Activated CD4-positive, alpha-beta memory T cell treated with anti-CD3 and anti-CD28 coated beads, Interleukin-2, amount 10 ng/mL, durations not matched to agents 7 days and 5 days (primary cell): ENCODE measurements at regions of chr3 and their contacts with region 1.

Region 1: DNA sequence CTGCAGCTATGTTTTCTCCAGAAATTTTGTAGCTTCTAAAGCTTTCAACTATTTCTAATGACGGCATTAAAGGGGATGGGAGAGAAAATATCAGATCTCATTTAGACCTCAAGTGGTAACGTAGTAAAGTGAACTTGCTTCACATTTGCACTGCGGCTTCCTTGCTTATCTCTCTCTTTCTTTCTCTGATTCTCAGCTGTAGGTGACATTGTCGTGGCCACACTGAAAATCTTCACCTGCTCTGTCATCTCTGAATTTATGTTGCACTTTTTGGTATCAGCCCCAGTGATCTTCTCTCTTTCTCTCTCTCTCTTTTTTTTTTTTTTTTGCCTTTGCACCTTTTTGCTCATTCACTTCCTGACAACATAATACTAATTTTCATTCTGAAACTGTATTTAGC is 254.1 kb upstream of the SATB1 start:
- DNase-seq: peak; percentile 64
- H3K4me3 Mint-ChIP-seq: peak overlapping the region; percentile 43
- H3K27ac Mint-ChIP-seq: peak overlapping the region; percentile 85
- H3K4me1 Mint-ChIP-seq: peaks cover 79% of the 10 kb centered on the region
- H3K27me3 Mint-ChIP-seq: no peaks in the 10 kb centered on the region

Region 2: DNA sequence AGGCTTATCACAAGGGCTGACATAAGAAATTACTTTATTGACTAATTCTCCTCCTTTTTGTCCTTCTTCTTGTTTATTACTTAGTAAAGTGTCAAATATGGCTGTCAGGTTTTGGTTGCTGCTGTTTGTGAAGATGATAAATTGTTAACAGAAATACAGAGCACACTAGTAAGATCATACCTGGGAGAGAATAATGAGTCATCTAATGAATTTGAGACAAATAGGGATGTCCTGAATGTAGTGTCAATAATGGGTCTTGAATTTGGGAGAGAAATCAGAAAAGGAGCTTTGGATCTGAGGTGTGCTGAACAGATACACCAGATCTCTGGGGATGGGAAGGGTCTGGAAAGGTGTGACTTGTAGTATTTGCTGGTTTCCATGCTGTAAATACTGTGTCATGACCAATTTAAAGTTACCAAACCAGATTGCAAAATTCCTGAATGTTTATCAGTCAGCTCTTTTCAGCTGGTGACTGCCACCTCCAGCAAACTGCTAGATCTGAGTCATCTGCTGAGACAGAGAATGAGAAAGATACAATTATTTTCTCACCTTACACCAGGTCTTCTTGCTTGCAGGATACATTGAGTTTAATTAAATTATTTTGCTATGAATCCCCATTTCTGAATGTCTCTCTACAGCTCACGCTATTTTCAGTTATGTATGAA is 177.4 kb before region 1 on chr3:
- CTCF ChIA-PET with region 1: no interaction called
- POLR2A ChIA-PET with region 1: no interaction called
- DNase-seq: no peak
- H3K4me3 Mint-ChIP-seq: no peak overlapping the region
- H3K27ac Mint-ChIP-seq: no peak overlapping the region
- H3K4me1 Mint-ChIP-seq: peaks cover 32% of the 10 kb centered on the region
- H3K27me3 Mint-ChIP-seq: no peaks in the 10 kb centered on the region

Region 3: DNA sequence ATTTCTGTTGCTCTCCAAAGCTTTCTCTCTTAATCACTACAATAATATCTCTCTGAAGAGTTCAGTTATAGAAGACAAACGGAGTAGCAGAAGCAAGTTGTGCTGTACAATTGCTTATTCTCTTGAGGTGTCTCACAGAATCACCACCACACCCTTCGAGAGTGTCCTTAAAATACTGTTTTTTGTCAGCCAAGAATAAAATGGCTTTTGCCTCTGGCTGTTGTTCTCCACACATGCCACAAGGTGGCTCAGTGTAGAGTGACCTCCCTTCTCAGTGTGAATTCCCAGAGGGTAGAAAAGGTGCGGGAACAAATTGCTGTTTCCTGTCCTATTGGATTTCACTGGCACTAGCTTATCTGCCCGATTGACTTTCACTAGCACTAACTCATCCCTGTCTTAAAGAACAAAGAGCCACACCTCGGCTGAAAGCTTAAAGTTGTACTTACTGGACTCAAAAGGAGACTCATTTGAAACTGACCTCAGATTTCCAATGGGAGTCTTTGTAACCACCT is 119.9 kb before region 1 on chr3:
- CTCF ChIA-PET with region 1: interaction called, 13 read pairs
- POLR2A ChIA-PET with region 1: interaction called, 6 read pairs
- DNase-seq: peak; percentile 42
- H3K4me3 Mint-ChIP-seq: no peak overlapping the region
- H3K27ac Mint-ChIP-seq: peak overlapping the region; percentile 80
- H3K4me1 Mint-ChIP-seq: peaks cover 59% of the 10 kb centered on the region
- H3K27me3 Mint-ChIP-seq: no peaks in the 10 kb centered on the region

Region 4: DNA sequence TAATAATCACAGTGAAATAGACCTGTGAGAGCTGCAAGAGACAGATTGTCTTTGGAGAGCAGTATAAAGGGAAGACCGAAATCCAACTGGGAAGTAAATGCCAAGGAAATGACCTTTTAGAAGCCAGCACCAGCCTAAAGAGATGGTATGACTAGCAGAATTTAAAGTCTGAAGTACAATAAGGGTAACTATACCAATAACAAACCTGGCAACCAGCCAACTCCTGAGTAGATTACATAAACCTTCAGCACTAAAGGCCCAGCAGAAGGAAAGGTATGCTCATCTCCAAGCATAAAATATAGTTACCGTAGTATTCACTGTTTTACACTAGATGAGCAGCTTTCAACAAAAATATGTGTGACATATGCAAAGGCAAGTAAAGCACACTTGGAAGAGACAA is 99.0 kb before region 1 on chr3:
- CTCF ChIA-PET with region 1: no interaction called
- POLR2A ChIA-PET with region 1: no interaction called
- DNase-seq: no peak
- H3K4me3 Mint-ChIP-seq: no peak overlapping the region
- H3K27ac Mint-ChIP-seq: no peak overlapping the region
- H3K4me1 Mint-ChIP-seq: peaks cover 3% of the 10 kb centered on the region
- H3K27me3 Mint-ChIP-seq: no peaks in the 10 kb centered on the region

Region 5: GRCh38 chr3:18649666-18650363 is 29.4 kb before region 1 on chr3:
- CTCF ChIA-PET with region 1: interaction called, 4 read pairs
- POLR2A ChIA-PET with region 1: interaction called, 13 read pairs
- DNase-seq: peak; percentile 61
- H3K4me3 Mint-ChIP-seq: peak overlapping the region; percentile 25
- H3K27ac Mint-ChIP-seq: peak overlapping the region; percentile 90
- H3K4me1 Mint-ChIP-seq: peaks cover 86% of the 10 kb centered on the region
- H3K27me3 Mint-ChIP-seq: no peaks in the 10 kb centered on the region

Region 6: GRCh38 chr3:18657858-18658820 is 21.1 kb before region 1 on chr3:
- CTCF ChIA-PET with region 1: interaction called, 4 read pairs
- POLR2A ChIA-PET with region 1: interaction called, 15 read pairs
- DNase-seq: peak; percentile 46
- H3K4me3 Mint-ChIP-seq: peak overlapping the region; percentile 8
- H3K27ac Mint-ChIP-seq: peak overlapping the region; percentile 67
- H3K4me1 Mint-ChIP-seq: peaks cover 64% of the 10 kb centered on the region
- H3K27me3 Mint-ChIP-seq: no peaks in the 10 kb centered on the region